Uterus (tissue), 4 donors: ENCODE measurements at regions of chr12 and their contacts with region 1.

Region 1: DNA sequence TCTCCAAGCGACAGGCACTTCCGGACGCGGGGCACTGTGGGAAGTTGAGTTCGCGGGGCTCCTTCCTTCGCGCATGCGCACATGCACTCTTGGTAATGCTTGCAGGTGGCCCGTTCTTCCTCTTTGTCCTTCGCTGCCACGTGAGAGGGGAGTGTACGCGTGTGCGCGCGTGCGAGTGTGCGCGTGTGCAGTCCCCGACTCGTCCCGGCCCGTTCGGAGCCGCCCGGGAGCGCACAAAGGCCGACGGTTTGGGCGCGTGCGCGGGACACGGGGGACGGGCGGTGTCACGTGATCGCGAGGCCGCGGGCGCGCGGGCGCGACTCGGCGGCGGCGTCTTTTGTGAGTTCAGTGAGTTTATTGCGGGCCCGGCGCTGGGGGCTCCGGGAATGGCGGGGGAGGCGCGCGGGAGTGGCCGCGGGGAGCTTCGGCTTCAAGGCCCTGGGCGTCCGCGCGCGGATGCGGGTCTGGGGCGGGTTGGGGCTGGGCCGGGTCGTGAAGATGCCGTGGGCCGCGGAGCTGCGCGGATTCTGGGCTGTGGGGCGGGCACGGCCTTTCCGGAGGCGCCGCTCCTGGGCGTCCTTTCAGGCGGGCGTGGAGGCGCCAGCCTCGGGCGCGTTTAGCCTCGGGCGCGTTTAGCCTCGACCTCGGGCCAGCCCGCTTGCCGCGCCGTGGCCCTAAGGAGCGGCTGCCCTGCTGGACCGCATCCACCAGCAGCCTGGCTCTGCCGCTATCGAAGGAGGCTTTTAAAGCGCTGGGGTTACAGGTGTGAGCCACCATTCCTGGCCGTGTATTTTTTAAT is at the start of gene ZNF84:
- DNase-seq: peak; percentile 94 to 95
- H3K4me3 ChIP-seq: peak within 1 kb of the TSS; percentile 35 to 83
- H3K27ac ChIP-seq: peak within 1 kb of the TSS; percentile 75 to 95
- H3K4me1 ChIP-seq: peaks cover 0 to 4% of the 10 kb centered on the region in 2 donors
- H3K27me3 ChIP-seq: no peaks in the 10 kb centered on the region
- CTCF ChIP-seq: peak in 1 of 4 experiments; percentile 19
- POLR2A ChIP-seq: peak; percentile 16 to 68
- total RNA-seq, gene ZNF84: 29.7 to 452 (median 75.6) TPM

Region 2: GRCh38 chr12:132972374-132972773 is 65.0 kb before region 1 on chr12:
- intact Hi-C with region 1: no loop called
- DNase-seq: no peak
- H3K4me3 ChIP-seq: no peak overlapping the region
- H3K27ac ChIP-seq: no peak overlapping the region
- H3K4me1 ChIP-seq: no peaks in the 10 kb centered on the region
- H3K27me3 ChIP-seq: no peaks in the 10 kb centered on the region
- CTCF ChIP-seq: no peak
- POLR2A ChIP-seq: no peak

Region 3: DNA sequence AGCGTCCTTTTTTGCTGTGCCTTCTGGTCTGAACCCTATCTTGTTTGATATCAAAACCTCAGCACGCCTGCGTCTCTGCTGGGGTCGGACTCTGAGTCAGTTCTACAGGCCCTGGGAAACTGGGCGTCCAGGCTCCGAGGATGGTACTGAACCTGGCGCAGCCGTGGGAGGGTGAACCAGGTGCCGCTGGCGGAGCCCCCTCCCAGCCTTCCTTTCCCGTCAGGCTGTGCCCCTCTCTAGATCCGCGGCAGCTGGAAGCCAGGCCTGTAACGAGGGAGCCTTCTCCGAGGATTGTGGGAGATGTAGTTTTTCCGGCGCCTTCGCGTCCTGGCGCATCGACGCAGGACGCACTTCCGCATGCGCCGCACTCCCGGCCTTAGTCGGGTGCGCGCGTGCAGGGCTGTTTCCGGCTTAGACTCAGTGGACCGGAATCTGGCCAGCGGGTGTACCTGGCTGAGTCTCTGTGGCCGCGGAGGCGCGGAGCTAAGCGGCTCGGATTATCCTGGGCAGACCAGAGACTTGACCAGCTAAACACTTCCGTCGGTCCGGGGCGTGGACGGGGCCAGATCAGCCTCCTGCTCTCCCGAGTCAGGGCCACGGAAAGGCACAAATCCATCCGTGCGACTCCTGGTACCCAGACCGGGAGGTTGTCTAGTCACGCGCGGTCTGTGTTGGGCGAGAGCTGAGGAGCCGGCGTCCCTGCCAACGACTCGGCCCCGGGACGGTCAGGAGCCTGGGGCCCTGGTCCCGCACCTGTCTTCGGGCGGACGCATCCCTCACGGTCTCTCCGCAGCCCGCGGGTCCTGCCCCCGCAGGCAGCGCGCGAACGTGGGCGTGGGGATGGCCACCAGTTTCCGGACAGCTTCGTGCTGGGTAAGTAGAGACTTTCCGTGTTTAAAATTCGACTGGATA is 51.1 kb before region 1 on chr12 and contains the start of gene ZNF26:
- intact Hi-C with region 1: loop called (anchors 10 kb)
- DNase-seq: peak; percentile 89 to 90
- H3K4me3 ChIP-seq: peak within 1 kb of the TSS; percentile 68 to 90
- H3K27ac ChIP-seq: peak within 1 kb of the TSS; percentile 72 to 85
- H3K4me1 ChIP-seq: no peaks in the 10 kb centered on the region
- H3K27me3 ChIP-seq: no peaks in the 10 kb centered on the region
- CTCF ChIP-seq: peak in 1 of 4 experiments; percentile 20
- POLR2A ChIP-seq: peak in 1 of 2 donors; percentile 60
- total RNA-seq, gene ZNF26: 7.2 to 38.7 (median 17.7) TPM

Region 4: DNA sequence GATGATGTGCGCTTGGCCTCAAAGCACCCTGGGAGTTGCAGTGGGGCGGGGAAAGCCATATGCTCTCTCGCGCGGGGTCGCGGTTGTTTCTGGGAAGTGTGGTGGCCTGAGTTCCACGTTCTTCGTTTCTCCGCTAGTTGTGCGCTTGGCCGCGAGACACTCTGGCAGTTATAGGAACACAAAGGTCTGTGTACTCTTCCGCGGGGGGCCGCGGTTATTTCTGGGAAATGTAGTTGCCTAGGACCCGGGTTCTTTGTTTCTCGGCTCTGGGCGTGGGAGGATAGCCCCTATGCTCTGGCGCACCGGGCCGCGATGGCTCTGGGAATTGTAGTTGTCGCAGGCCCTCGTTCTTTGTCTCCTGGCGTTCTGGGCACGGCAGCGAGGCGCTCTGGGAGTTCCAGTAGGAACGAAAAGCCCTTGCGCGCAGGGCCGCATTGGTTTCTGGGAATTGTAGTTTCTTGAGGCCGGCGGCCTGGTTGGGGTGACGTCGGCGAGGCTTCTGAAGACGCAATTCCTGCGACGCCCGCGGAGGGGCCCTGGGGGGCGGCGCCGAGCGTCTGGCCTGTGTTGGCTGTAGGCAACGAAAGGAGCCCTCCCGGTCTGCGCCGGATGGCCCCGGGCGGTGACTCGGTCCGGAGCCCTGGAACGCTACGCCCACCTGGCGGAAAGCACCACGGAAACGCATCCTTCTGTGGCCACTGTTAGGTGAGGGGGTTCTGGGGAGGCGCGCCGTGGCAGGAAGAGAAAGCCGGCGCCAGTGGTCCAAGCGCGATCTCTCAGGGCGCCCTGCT is 43.2 kb after region 1 on chr12 and contains the start of gene ZNF140:
- intact Hi-C with region 1: loop called (anchors 5 kb)
- DNase-seq: peak; percentile 95 to 96
- H3K4me3 ChIP-seq: peak within 1 kb of the TSS; percentile 91 to 95
- H3K27ac ChIP-seq: peak within 1 kb of the TSS; percentile 96 to 98
- H3K4me1 ChIP-seq: no peaks in the 10 kb centered on the region
- H3K27me3 ChIP-seq: no peaks in the 10 kb centered on the region
- CTCF ChIP-seq: peak in 3 of 4 experiments; percentile 23 to 57 (median 27)
- POLR2A ChIP-seq: peak; percentile 22 to 54
- total RNA-seq, gene ZNF140: 3.6 to 53.8 (median 19.6) TPM